ENCODE measurements at regions of chr5 and their contacts with region 1.

Region 1: DNA sequence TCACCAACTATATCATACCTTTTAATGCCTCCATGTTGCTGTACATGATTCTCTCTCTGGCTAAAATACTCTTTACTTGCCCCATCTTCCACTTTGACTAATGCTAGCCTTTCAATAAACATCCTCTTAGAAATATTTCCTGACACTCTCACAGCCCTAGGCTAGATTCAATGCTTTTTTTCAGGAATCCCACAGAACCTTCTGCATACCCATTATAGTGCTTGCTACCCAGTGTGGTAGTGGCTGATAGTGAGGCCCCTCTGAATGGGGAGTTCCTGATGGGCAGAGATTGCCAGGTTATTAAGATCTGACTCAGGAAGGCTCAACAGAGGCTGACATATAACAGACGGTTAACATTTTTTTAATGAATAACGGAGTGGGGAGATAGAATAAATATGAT is 11.6 kb downstream of the SSBP2 start:
- DNase-seq: no peak
- CTCF ChIP-seq: no peak

Region 2: GRCh38 chr5:81751009-81751835 is 11.9 kb after region 1 on chr5 and contains the start of gene SSBP2:
- CTCF ChIA-PET with region 1: no interaction called
- POLR2A ChIA-PET with region 1: interaction called, 12 read pairs
- DNase-seq: peak; percentile 97
- CTCF ChIP-seq: no peak

Region 3: DNA sequence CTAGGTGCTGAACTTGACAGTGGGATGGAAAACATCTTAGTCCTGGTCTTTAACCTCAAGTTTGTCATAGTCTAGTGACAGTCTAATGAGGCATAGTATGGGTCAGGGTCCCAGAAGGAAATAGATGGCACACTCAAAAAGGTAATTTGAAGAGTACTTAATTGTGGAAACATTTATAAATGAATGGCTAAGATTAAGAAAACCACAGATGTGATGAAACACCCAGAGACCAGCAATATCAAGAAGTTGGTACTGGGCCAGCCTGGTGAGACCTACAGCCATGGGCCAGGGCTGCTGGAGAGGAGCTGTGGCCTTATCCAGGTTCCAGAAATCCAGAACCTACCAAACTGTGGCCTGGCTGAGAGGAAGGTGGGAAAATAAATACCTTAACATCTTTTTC is 139.0 kb after region 1 on chr5:
- CTCF ChIA-PET with region 1: no interaction called
- POLR2A ChIA-PET with region 1: no interaction called
- DNase-seq: no peak
- CTCF ChIP-seq: no peak